K562 (cell line): ENCODE measurements at regions of chr1 and their contacts with region 1.

Region 1: GRCh38 chr1:95084317-95085176 is 11.8 kb upstream of the ALG14 start:
- DNase-seq: peak; percentile 68 to 84 (median 77)
- ATAC-seq: peak; percentile 78
- H3K4me3 ChIP-seq: no peak overlapping the region; the same call in 1 of the 2 replicates
- H3K27ac ChIP-seq: peak overlapping the region; percentile 95
- H3K4me1 ChIP-seq: peaks cover 9 to 43% of the 10 kb centered on the region in 2 experiments; a peak in 4 of 5 replicates
- H3K27me3 ChIP-seq: no peaks in the 10 kb centered on the region
- CTCF ChIP-seq: peak; percentile 64 to 84 (median 76); a peak in 5 of 6 replicates
- EP300 ChIP-seq: peak; percentile 54
- POLR2A ChIP-seq: no peak
- RAD21 ChIP-seq: peak; percentile 58 to 69

Region 2: DNA sequence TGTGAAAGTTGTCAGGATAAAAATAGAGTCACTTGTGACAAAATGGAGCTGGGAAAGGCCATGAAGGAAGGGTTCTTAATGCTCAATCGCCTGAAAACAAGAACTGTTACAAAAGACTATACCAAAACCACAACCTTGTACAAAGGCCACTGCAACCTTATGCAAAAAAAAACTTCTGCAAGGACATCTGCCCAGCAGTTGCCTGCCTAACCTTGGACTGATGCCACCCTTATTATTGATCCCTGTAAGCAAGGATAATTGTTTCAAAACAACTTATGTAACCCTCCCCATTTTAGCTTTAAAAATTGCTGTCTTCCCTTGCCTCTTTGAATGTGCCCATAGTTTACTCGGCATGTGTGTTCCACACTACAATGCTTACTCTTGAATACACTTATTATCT is 17.5 kb before region 1 on chr1:
- CTCF ChIA-PET with region 1: no interaction called
- POLR2A ChIA-PET with region 1: no interaction called
- in situ Hi-C with region 1: no loop called
- intact Hi-C with region 1: no loop called
- DNase-seq: no peak
- ATAC-seq: no peak
- H3K4me3 ChIP-seq: no peak overlapping the region
- H3K27ac ChIP-seq: no peak overlapping the region
- H3K4me1 ChIP-seq: peaks cover 4 to 6% of the 10 kb centered on the region in 2 experiments; a peak in 3 of 5 replicates
- H3K27me3 ChIP-seq: no peaks in the 10 kb centered on the region
- CTCF ChIP-seq: no peak
- EP300 ChIP-seq: no peak
- POLR2A ChIP-seq: no peak
- RAD21 ChIP-seq: no peak

Region 3: GRCh38 chr1:95095833-95096217 is 11.3 kb after region 1 on chr1:
- CTCF ChIA-PET with region 1: no interaction called
- POLR2A ChIA-PET with region 1: interaction called, 11 read pairs
- in situ Hi-C with region 1: no loop called
- intact Hi-C with region 1: no loop called
- DNase-seq: no peak
- ATAC-seq: peak; percentile 44
- H3K4me3 ChIP-seq: no peak overlapping the region
- H3K27ac ChIP-seq: 0 out of 3 replicates have a peak overlapping the region, but pooled peaks have one; percentile 1
- H3K4me1 ChIP-seq: peaks cover 11 to 28% of the 10 kb centered on the region in 2 experiments; a peak in 4 of 5 replicates
- H3K27me3 ChIP-seq: no peaks in the 10 kb centered on the region
- CTCF ChIP-seq: no peak
- EP300 ChIP-seq: no peak
- POLR2A ChIP-seq: no peak
- RAD21 ChIP-seq: no peak

Region 4: DNA sequence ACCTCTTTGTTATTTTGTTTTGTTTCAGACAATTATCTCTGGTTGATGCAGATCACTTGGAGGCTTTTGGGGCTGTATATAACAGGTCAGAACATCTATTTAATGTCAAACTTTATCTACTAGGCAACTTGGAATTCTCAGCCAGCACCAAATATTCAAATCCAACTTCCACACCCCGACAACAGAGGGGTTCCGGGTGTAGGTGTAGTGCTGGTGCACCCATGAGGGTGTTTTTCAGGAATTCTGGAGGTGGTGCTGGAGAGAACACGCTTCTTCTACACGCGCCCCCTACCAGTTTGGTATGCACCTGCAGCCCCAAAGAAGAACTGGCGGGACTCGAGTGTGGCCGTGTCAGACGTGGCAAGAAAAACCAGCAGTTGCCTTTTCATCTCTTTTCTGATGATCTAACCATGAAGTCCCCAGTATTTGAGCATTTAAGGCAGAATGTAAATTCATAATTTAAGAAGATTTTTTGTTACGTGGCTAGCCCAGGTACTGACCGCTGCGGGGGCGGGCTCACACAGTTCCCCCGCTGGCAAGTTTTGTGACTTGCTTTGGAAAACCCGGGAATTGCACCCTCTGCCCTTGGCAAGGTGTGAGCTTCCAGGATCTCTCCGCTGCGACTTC is 32.1 kb after region 1 on chr1:
- CTCF ChIA-PET with region 1: no interaction called
- POLR2A ChIA-PET with region 1: interaction called, 5 read pairs
- in situ Hi-C with region 1: loop called (anchors 5 kb)
- intact Hi-C with region 1: loop called (anchors 1 kb)
- DNase-seq: peak; percentile 64 to 89 (median 74)
- ATAC-seq: peak; percentile 76
- H3K4me3 ChIP-seq: peak overlapping the region; percentile 83
- H3K27ac ChIP-seq: peak overlapping the region; percentile 81
- H3K4me1 ChIP-seq: peaks cover 17 to 42% of the 10 kb centered on the region in 2 experiments; a peak in 4 of 5 replicates
- H3K27me3 ChIP-seq: no peaks in the 10 kb centered on the region
- CTCF ChIP-seq: peak; percentile 87 to 92 (median 90)
- EP300 ChIP-seq: no peak
- POLR2A ChIP-seq: no peak
- RAD21 ChIP-seq: peak; percentile 24 to 61; a peak in 3 of 4 replicates

Region 5: DNA sequence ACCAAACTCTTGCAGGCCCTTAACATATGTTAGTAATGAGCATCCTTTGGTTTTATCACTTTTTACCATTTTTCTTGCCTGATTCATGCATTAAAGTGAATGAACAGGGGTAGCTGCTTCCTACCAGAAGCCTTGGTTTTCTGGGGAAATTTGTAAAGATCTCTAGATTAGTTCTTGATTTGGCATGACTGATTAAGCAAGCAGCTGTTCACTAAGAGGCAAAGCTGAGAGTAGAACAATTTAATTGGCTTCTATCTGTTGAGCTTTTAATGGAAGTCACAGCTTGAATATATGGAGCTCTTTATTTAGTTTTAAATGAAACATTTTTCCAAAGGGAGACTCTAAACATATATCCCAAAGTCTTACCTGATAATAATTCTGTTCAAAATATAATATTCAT is 56.2 kb after region 1 on chr1:
- CTCF ChIA-PET with region 1: no interaction called
- POLR2A ChIA-PET with region 1: no interaction called
- in situ Hi-C with region 1: no loop called
- intact Hi-C with region 1: loop called (anchors 1 kb)
- DNase-seq: no peak
- ATAC-seq: no peak
- H3K4me3 ChIP-seq: no peak overlapping the region
- H3K27ac ChIP-seq: no peak overlapping the region
- H3K4me1 ChIP-seq: peaks cover 0 to 8% of the 10 kb centered on the region in 2 experiments; a peak in 2 of 5 replicates
- H3K27me3 ChIP-seq: no peaks in the 10 kb centered on the region
- CTCF ChIP-seq: no peak
- EP300 ChIP-seq: no peak
- POLR2A ChIP-seq: no peak
- RAD21 ChIP-seq: no peak

Region 6: GRCh38 chr1:95179205-95179986 is 94.8 kb after region 1 on chr1:
- CTCF ChIA-PET with region 1: no interaction called
- POLR2A ChIA-PET with region 1: no interaction called
- in situ Hi-C with region 1: no loop called
- intact Hi-C with region 1: loop called (anchors 10 kb)
- DNase-seq: peak; percentile 74 to 92 (median 86)
- ATAC-seq: peak; percentile 98
- H3K4me3 ChIP-seq: no peak overlapping the region
- H3K27ac ChIP-seq: peak overlapping the region; percentile 64
- H3K4me1 ChIP-seq: peaks cover 14 to 20% of the 10 kb centered on the region in 2 experiments; a peak in 4 of 5 replicates
- H3K27me3 ChIP-seq: no peaks in the 10 kb centered on the region
- CTCF ChIP-seq: 0 out of 6 replicates have a peak, but pooled peaks of 1 of the 3 experiments have one; percentile 2
- EP300 ChIP-seq: peak; percentile 82
- POLR2A ChIP-seq: no peak
- RAD21 ChIP-seq: 0 out of 4 replicates have a peak, but pooled peaks of 1 of the 2 experiments have one; percentile 11